Heart left ventricle (tissue), 16 donors: ENCODE measurements at regions of chr17 and their contacts with region 1.

Region 1: DNA sequence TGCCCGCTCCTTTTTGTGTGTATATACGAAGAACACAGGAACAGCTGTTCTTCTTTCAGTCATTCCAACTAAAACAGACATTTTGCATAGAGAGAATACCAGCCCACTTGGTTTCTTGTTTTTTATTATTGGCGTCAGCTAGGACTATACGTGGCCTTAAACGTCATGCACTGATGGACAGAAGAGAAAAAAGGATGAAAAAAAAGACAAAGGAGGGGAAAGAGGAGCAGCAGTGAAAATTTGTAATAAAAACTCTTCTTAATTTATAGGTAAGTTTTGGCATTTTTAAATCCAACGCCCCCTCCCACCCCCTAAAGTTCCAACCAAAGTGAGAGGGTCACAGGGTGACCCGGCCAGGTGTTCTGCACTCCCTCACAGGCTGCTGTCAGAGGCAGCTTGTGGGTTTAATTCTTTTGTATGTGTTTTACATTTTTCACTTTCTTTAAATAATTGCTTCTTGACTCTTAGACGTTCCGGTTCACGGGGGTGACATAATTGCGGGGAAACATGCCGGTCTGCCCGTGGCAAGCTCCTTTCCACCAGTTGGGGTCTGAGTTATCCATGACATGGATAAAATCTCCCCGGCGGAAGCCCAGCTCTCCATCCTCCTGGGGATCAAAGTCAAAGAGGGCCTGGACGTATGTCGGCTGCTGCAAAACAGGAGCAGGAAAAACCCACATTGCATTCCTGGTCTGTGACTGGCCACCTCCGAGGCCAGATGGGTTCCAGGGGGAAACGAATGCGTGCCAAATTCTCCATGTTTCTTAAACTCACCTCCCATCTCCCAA is 30.9 kb upstream of the SLC25A19 start:
- DNase-seq: no peak
- ATAC-seq: no peak
- H3K4me3 ChIP-seq: no peak overlapping the region
- H3K27ac ChIP-seq: peak overlapping the region in 1 of 12 donors; percentile 95
- H3K4me1 ChIP-seq: peaks cover 0 to 59% (median 2%) of the 10 kb centered on the region in 12 donors
- H3K27me3 ChIP-seq: no peaks in the 10 kb centered on the region
- CTCF ChIP-seq: no peak
- POLR2A ChIP-seq: no peak

Region 2: DNA sequence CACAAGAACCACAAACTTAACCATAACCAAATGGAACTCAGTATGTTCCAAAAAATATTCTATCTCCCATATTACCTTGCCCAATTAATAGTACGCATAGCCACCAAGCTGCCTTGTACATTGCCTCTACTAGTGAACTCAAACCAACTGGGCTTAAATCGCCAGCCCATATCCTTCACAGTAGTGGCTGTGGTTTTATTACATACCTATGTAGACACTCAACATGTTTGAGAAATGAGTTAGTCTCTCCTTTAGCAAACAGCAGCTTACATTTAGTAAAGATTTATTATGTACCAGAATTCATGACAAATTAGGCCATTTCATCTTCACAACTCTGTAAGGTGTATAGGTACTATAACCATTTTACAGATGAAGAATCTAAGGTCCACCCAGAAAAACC is 44.0 kb after region 1 on chr17:
- intact Hi-C with region 1: loop called in 1 of 10 experiments (anchors 5 kb)
- DNase-seq: no peak
- ATAC-seq: no peak
- H3K4me3 ChIP-seq: no peak overlapping the region
- H3K27ac ChIP-seq: no peak overlapping the region
- H3K4me1 ChIP-seq: peaks cover 0 to 87% (median 32%) of the 10 kb centered on the region in 12 donors
- H3K27me3 ChIP-seq: no peaks in the 10 kb centered on the region
- CTCF ChIP-seq: no peak
- POLR2A ChIP-seq: no peak

Region 3: GRCh38 chr17:75405365-75406221 is 85.5 kb after region 1 on chr17 and contains the start of gene GRB2:
- intact Hi-C with region 1: loop called (anchors 1 to 5 kb)
- DNase-seq: peak; percentile 99 to 100 (median 99)
- ATAC-seq: peak; percentile 98 to 99 (median 98)
- H3K4me3 ChIP-seq: peak within 1 kb of the TSS; percentile 67 to 100 (median 96)
- H3K27ac ChIP-seq: peak within 1 kb of the TSS; percentile 70 to 99 (median 93)
- H3K4me1 ChIP-seq: peaks cover 2 to 45% (median 26%) of the 10 kb centered on the region in 12 donors
- H3K27me3 ChIP-seq: no peaks in the 10 kb centered on the region
- CTCF ChIP-seq: peak in 1 of 12 donors; percentile 19
- POLR2A ChIP-seq: peak in 1 of 2 donors; percentile 90
- total RNA-seq, gene GRB2: 37.2 to 145 (median 67.7) TPM

Region 4: GRCh38 chr17:75412455-75413317 is 92.6 kb after region 1 on chr17:
- intact Hi-C with region 1: loop called in 4 of 10 experiments (anchors 2 to 5 kb)
- DNase-seq: peak in 3 of 5 donors; percentile 39 to 50 (median 46)
- ATAC-seq: peak; percentile 21 to 67 (median 53)
- H3K4me3 ChIP-seq: peak overlapping the region in 7 of 12 donors; percentile 4 to 32 (median 10)
- H3K27ac ChIP-seq: no peak overlapping the region
- H3K4me1 ChIP-seq: peaks cover 0 to 14% (median 1%) of the 10 kb centered on the region in 12 donors
- H3K27me3 ChIP-seq: no peaks in the 10 kb centered on the region
- CTCF ChIP-seq: peak; percentile 65 to 90 (median 78)
- POLR2A ChIP-seq: no peak

Region 5: GRCh38 chr17:75524953-75525719 is 205.0 kb after region 1 on chr17 and contains the start of gene LLGL2:
- intact Hi-C with region 1: loop called in 3 of 10 experiments (anchors 10 kb)
- DNase-seq: peak; percentile 60 to 89 (median 75)
- ATAC-seq: peak; percentile 35 to 86 (median 82)
- H3K4me3 ChIP-seq: peak within 1 kb of the TSS; percentile 28 to 83 (median 71)
- H3K27ac ChIP-seq: peak within 1 kb of the TSS in 11 of 12 donors; percentile 27 to 78 (median 72)
- H3K4me1 ChIP-seq: peaks cover 0 to 22% (median 12%) of the 10 kb centered on the region in 12 donors
- H3K27me3 ChIP-seq: peaks cover 0 to 6% (median 0%) of the 10 kb centered on the region in 9 donors
- CTCF ChIP-seq: peak; percentile 31 to 69 (median 50)
- POLR2A ChIP-seq: no peak
- total RNA-seq, gene LLGL2: 1.8 to 5.9 (median 3.4) TPM